Activated CD8-positive, alpha-beta T cell treated with anti-CD3 and anti-CD28 coated beads for 36 hours (primary cell): ENCODE measurements at regions of chr7 and their contacts with region 1.

Region 1: GRCh38 chr7:55255496-55256435 is 109.4 kb upstream of the LANCL2 start:
- DNase-seq: peak; percentile 79
- ATAC-seq: peak; percentile 93
- H3K4me3 Mint-ChIP-seq: peak overlapping the region; percentile 74
- H3K27ac Mint-ChIP-seq: peak overlapping the region; percentile 28
- H3K4me1 Mint-ChIP-seq: peaks cover 3% of the 10 kb centered on the region
- H3K27me3 Mint-ChIP-seq: peaks cover 39% of the 10 kb centered on the region
- CTCF ChIP-seq: no peak

Region 2: DNA sequence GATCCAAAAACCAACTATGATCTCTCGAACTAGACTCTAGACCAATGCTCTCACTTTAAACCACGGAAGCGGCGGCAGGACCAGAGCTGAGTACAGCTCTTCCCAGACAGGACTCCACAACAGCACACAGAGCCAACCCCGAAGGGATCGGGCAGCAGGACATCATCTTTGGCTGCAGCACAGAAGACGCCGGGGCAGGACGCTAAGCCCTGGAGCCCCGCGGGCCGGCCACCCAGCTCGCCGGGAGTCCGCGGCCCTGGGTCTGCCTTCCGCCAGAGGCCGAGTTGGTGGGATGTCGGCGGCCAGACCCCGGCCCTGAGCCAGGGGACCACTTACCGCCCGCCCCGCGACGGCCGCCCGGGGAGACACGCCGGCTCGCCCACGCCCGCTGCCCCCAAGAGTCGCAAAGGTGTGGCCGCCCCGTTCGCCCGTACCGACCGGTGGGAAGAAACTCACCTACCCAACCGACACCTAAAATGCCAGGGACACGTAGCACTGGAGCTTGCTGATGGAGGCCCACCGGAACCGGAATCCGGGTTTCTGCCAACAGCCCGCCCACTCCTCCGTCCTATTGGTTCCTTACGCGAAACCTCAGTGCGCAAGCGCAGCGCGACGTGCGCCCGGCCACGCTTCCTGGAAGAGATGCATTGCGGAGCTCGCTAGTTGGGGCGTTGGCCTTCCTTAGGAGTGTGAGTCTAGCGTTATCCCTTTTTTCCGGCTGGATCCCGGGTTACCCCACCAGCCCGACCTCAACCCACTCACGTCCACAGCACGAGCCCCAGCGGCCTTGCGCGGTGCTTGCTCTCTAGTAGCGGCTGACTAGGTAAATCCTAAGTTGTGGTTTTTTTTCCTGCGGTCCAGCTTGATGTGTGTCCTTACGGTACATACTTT is 496.8 kb before region 1 on chr7 and contains the start of gene SEC61G:
- CTCF ChIA-PET with region 1: interaction called, 31 read pairs
- POLR2A ChIA-PET with region 1: interaction called, 4 read pairs
- intact Hi-C with region 1: no loop called
- DNase-seq: peak; percentile 97
- ATAC-seq: peak; percentile 94
- H3K4me3 Mint-ChIP-seq: peak within 1 kb of the TSS; percentile 100
- H3K27ac Mint-ChIP-seq: peak within 1 kb of the TSS; percentile 96
- H3K4me1 Mint-ChIP-seq: peaks cover 25% of the 10 kb centered on the region
- H3K27me3 Mint-ChIP-seq: no peaks in the 10 kb centered on the region
- CTCF ChIP-seq: no peak
- total RNA-seq, gene SEC61G: 162 to 172 TPM

Region 3: DNA sequence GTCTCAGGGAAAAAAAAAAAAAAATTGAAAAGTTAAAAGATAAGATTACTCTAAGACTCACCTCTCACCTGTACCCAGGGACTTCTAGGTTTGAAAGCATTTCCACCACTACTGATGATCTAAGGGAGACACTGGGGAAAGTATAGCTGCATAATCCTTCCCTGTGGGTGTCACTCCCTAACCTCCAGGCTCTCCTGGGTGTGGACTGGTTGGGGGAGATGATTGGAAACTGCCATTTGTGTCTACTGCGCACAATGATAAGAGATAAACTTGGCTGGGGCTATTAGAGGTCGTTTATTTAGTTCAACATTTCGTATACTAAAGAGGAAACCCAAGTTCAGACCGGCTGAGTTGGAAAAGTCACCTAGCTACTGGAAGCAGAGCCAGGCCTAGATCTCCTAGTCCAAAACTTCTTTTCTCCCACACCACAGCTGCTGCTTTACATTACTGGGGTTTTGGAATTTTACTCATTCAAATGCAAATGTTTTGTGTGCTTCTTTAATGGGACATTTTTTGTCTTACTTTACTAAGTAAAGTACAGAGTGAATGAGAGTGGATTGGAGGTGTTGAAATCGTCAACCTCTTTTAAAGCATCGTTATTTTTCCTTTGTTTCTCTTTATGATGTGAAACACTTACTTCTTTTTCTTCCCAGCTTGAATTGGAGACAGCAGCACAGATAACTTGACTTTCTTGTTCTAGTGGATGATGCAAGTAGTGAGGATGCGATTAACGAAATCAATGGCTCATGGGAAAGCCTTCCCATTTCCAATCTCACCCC is 474.4 kb before region 1 on chr7:
- CTCF ChIA-PET with region 1: interaction called, 135 read pairs
- POLR2A ChIA-PET with region 1: no interaction called
- intact Hi-C with region 1: loop called (anchors 5 kb)
- DNase-seq: no peak
- ATAC-seq: no peak
- H3K4me3 Mint-ChIP-seq: no peak overlapping the region
- H3K27ac Mint-ChIP-seq: no peak overlapping the region
- H3K4me1 Mint-ChIP-seq: no peaks in the 10 kb centered on the region
- H3K27me3 Mint-ChIP-seq: peaks cover 2% of the 10 kb centered on the region
- CTCF ChIP-seq: no peak

Region 4: DNA sequence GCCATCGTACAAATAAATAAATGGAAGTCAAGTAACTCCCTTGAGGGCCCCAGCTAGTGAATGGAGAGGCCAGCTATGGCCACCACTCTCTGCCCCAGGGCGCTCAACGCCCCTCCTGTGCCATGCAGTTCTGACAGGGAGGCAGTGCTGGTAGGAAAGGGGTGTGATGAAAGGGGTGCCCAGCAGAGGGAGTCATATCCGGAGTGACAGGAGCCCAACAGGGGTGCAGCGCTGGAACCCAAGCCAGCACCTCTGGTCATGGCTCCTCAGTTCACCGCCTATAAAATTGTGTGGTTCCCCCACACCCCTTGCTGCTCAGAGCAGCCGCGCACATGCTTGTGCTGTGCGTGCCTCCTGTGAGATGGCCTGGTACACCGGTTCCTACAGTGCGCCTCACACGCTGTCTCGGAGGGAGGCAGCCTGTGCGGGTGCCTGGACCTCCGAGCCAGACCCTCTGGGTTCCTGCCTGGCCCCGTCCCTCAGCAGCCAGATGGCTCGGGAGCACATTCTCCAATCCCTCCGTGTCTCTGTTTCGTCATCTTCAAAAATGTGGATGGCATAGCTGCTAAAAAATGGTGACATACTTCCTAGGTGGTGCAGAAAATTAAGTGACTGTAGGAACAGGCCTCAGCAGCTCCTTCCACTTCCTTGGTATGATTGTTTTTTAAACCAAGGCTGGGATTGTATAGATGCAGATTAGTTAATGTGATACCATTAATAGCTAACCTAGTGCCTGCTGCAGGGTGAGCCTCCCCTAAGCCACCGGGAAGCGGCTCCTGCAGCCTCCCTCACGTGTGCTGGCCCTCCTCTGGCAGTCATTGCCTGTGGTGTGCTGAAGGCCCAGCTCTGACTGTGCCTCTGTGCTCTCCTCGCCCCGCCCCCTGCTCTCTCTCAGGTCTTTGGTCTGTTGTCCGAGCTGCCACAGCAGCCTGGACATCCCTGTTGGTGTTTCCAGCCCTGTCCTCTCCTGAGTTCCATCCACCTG is 111.1 kb before region 1 on chr7:
- CTCF ChIA-PET with region 1: interaction called, 10 read pairs
- POLR2A ChIA-PET with region 1: no interaction called
- intact Hi-C with region 1: no loop called
- DNase-seq: peak; percentile 17
- ATAC-seq: no peak
- H3K4me3 Mint-ChIP-seq: no peak overlapping the region
- H3K27ac Mint-ChIP-seq: no peak overlapping the region
- H3K4me1 Mint-ChIP-seq: peaks cover 3% of the 10 kb centered on the region
- H3K27me3 Mint-ChIP-seq: peaks cover 12% of the 10 kb centered on the region
- CTCF ChIP-seq: no peak

Region 5: DNA sequence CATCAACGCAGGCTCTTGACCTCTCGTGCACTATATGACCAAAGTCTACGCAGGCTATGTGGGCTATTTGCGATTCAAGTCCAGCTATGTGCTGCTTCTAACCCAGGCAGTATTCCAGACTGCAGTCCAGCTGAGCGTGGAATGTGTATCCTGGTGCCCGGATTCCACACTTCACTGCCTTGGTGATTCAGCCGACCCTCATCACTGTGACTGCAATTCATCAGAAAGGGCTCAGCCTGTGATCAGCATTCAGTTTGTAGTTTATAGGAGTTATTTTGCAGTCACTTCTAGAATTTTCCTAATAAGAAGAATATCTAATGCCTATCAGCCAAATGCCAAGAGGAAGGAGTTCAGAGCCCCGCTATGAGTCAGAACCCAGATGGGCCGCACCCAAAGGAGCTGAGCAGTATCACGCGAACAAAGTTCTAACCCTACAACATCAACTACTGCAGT is 10.5 kb before region 1 on chr7:
- CTCF ChIA-PET with region 1: interaction called, 23 read pairs
- POLR2A ChIA-PET with region 1: no interaction called
- intact Hi-C with region 1: no loop called
- DNase-seq: no peak
- ATAC-seq: no peak
- H3K4me3 Mint-ChIP-seq: no peak overlapping the region
- H3K27ac Mint-ChIP-seq: no peak overlapping the region
- H3K4me1 Mint-ChIP-seq: no peaks in the 10 kb centered on the region
- H3K27me3 Mint-ChIP-seq: peaks cover 5% of the 10 kb centered on the region
- CTCF ChIP-seq: no peak

Region 6: GRCh38 chr7:55271069-55271626 is 15.4 kb after region 1 on chr7:
- CTCF ChIA-PET with region 1: interaction called, 38 read pairs
- POLR2A ChIA-PET with region 1: no interaction called
- intact Hi-C with region 1: no loop called
- DNase-seq: no peak
- ATAC-seq: no peak
- H3K4me3 Mint-ChIP-seq: no peak overlapping the region
- H3K27ac Mint-ChIP-seq: no peak overlapping the region
- H3K4me1 Mint-ChIP-seq: no peaks in the 10 kb centered on the region
- H3K27me3 Mint-ChIP-seq: peaks cover 3% of the 10 kb centered on the region
- CTCF ChIP-seq: no peak

Region 7: DNA sequence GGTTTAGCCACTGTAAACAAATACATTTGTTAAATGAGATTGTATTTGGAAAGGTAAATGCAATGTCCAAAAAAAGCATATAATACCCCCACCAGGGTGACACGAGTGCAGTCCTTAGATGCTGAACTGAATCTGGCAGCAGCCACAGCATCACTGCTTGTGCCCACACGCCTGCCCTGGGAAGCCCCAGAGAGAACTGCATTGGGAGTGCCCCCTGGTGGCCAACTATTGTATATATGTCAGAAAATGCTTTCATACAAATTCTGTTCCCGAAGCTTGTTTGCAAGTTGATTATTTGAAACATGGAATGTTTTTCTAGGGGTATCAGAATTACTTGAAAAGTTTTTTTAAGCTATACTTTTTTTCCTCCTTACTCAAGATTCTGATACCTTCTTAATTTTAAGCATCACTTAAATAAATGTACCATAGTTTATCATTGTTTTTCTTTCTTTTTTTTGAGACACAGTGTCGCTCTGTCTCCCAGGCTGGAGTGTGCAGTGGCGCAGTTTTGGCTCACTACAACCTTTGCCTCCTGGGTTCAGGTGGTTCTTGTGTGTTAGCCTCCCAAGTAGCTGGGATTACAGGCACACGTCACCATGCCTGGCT is 159.5 kb after region 1 on chr7:
- CTCF ChIA-PET with region 1: interaction called, 11 read pairs
- POLR2A ChIA-PET with region 1: no interaction called
- intact Hi-C with region 1: no loop called
- DNase-seq: peak; percentile 92
- ATAC-seq: peak; percentile 95
- H3K4me3 Mint-ChIP-seq: no peak overlapping the region
- H3K27ac Mint-ChIP-seq: no peak overlapping the region
- H3K4me1 Mint-ChIP-seq: peaks cover 2% of the 10 kb centered on the region
- H3K27me3 Mint-ChIP-seq: no peaks in the 10 kb centered on the region
- CTCF ChIP-seq: peak; percentile 82